ENCODE measurements at regions of chr16 and their contacts with region 1.

Region 1: DNA sequence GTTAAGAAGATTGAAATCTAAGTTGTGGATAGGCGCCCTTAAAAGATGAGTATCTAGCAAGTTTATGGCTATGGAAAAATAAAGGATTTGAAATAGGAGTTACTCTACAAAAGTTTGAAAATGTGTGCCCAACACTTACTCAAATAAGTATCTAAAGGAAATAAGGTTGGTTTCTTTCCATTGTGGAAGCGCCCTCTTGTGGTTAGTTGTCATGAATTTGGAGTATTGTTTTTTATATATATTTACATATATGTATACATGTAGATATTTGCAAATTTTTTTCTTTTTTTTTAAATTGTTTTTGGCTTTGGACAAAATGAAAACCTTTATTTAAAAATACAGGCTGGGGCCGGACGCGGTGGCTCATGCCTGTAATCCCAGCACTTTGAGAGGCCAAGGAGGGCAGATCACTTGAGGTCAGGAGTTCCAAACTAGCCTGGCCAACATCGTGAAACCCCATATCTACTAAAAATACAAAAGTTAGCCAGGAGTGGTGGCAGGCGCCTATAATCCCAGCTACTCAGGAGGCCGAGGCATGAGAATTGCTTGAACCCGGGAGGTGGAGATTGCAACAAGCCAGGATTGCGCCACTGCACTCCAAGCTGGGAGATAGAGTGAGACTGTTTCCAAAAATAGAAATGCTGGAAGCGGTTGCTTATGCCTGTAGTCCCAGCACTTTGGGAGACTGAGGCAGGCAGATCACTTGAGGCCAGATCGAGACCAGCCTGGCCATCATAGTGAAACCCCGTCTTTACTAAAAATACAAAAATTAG is 24.0 kb upstream of the VPS4A start:
- DNase-seq: peak; percentile 58 to 66 (median 61)
- H3K4me3 ChIP-seq: no peak overlapping the region
- H3K4me3 Mint-ChIP-seq: no peak overlapping the region
- H3K27ac ChIP-seq: no peak overlapping the region
- H3K27ac Mint-ChIP-seq: peak overlapping the region in 2 of 7 donors; percentile 65 to 72
- H3K4me1 ChIP-seq: no peaks in the 10 kb centered on the region
- H3K4me1 Mint-ChIP-seq: peaks cover 0 to 5% (median 3%) of the 10 kb centered on the region in 4 donors
- H3K27me3 ChIP-seq: no peaks in the 10 kb centered on the region
- H3K27me3 Mint-ChIP-seq: no peaks in the 10 kb centered on the region

Region 2: DNA sequence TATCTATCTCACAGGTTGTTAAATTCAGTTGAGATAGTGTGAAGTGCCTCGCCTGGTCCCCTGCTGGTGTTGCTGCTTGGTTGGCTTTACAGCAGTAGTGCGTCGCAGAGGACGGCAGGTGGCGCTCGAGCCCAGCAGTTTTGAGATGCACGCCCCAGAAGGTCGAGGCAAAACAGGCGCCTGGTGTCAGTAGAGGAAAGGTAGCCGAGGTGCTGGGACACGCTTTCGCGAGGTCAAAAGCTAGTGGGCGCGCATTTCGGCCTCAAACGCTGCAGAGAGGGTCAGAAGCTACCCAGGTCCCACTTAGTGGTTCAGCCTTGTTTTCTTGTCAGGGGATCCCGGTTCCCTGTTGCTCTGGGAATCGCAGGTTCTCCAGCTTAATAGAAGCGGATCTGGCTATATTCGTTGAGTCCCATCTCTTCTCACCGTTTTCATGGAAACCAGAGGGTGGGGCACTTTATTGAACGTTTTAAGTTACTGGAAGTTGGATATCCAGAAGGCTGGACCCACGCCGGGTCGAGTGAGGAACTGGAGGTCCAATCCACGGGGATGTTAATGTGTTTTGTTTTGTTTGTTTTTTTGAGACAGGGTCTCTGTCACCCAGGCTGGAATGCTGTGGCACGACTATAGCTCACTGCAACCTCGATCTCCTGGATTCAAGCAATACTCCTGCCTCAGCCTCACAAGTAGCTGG is 758.3 kb before region 1 on chr16:
- CTCF ChIA-PET with region 1: interaction called, 5 read pairs
- POLR2A ChIA-PET with region 1: no interaction called
- intact Hi-C with region 1: loop called (anchors 1 kb)
- DNase-seq: peak; percentile 85 to 89 (median 87)
- H3K4me3 ChIP-seq: no peak overlapping the region
- H3K4me3 Mint-ChIP-seq: peak overlapping the region; percentile 76 to 94 (median 90)
- H3K27ac ChIP-seq: no peak overlapping the region
- H3K27ac Mint-ChIP-seq: peak overlapping the region; percentile 52 to 95 (median 86)
- H3K4me1 ChIP-seq: peaks cover 21% of the 10 kb centered on the region
- H3K4me1 Mint-ChIP-seq: peaks cover 12 to 26% (median 21%) of the 10 kb centered on the region in 4 donors
- H3K27me3 ChIP-seq: no peaks in the 10 kb centered on the region
- H3K27me3 Mint-ChIP-seq: no peaks in the 10 kb centered on the region

Region 3: GRCh38 chr16:69150146-69150865 is 136.8 kb before region 1 on chr16:
- CTCF ChIA-PET with region 1: interaction called, 297 read pairs
- POLR2A ChIA-PET with region 1: interaction called, 4 read pairs
- intact Hi-C with region 1: loop called (anchors 1 kb)
- DNase-seq: peak; percentile 53 to 68 (median 64)
- H3K4me3 ChIP-seq: no peak overlapping the region
- H3K4me3 Mint-ChIP-seq: no peak overlapping the region
- H3K27ac ChIP-seq: no peak overlapping the region
- H3K27ac Mint-ChIP-seq: no peak overlapping the region
- H3K4me1 ChIP-seq: no peaks in the 10 kb centered on the region
- H3K4me1 Mint-ChIP-seq: peaks cover 0 to 4% (median 3%) of the 10 kb centered on the region in 4 donors
- H3K27me3 ChIP-seq: no peaks in the 10 kb centered on the region
- H3K27me3 Mint-ChIP-seq: no peaks in the 10 kb centered on the region

Region 4: GRCh38 chr16:69166221-69166833 is 120.8 kb before region 1 on chr16:
- CTCF ChIA-PET with region 1: interaction called, 24 read pairs
- POLR2A ChIA-PET with region 1: no interaction called
- intact Hi-C with region 1: no loop called
- DNase-seq: peak; percentile 17 to 70 (median 23)
- H3K4me3 ChIP-seq: no peak overlapping the region
- H3K4me3 Mint-ChIP-seq: peak overlapping the region in 7 of 8 donors; percentile 2 to 63 (median 16)
- H3K27ac ChIP-seq: peak overlapping the region; percentile 15
- H3K27ac Mint-ChIP-seq: peak overlapping the region; percentile 45 to 85 (median 76)
- H3K4me1 ChIP-seq: peaks cover 24% of the 10 kb centered on the region
- H3K4me1 Mint-ChIP-seq: peaks cover 23 to 26% (median 25%) of the 10 kb centered on the region in 4 donors
- H3K27me3 ChIP-seq: no peaks in the 10 kb centered on the region
- H3K27me3 Mint-ChIP-seq: no peaks in the 10 kb centered on the region

Region 5: DNA sequence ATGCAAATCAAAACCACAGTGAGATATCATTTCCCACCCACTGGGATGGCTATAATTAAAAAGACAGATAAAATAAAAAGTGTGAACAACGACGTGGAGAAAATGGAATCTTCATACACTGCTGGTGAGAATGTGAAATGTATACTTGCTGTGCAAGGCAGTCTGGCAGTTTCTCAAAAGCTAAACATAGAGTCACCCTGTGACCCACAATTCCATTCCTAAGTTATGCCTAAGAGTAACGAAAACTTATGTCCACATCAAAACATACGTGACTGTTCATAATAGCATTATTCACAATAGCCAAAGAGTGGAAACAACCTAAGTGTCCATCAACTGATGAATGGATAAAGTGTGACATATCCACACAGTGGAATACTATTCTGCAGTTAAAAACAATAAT is 14.1 kb before region 1 on chr16:
- CTCF ChIA-PET with region 1: interaction called, 15 read pairs
- POLR2A ChIA-PET with region 1: no interaction called
- intact Hi-C with region 1: no loop called
- DNase-seq: no peak
- H3K4me3 ChIP-seq: no peak overlapping the region
- H3K4me3 Mint-ChIP-seq: no peak overlapping the region
- H3K27ac ChIP-seq: no peak overlapping the region
- H3K27ac Mint-ChIP-seq: peak overlapping the region in 1 of 7 donors; percentile 53
- H3K4me1 ChIP-seq: no peaks in the 10 kb centered on the region
- H3K4me1 Mint-ChIP-seq: peaks cover 0 to 8% (median 1%) of the 10 kb centered on the region in 4 donors
- H3K27me3 ChIP-seq: no peaks in the 10 kb centered on the region
- H3K27me3 Mint-ChIP-seq: no peaks in the 10 kb centered on the region

Measured in CD4-positive, alpha-beta memory T cell (primary cell).